ENCODE measurements at regions of chr17 and their contacts with region 1.

Region 1: GRCh38 chr17:59440784-59441441 is 109.5 kb downstream of the YPEL2 start:
- DNase-seq: peak; percentile 80 to 81
- H3K4me3 ChIP-seq: no peak overlapping the region
- H3K27ac ChIP-seq: peak overlapping the region in 1 of 2 donors; percentile 35
- H3K4me1 ChIP-seq: no peaks in the 10 kb centered on the region
- H3K27me3 ChIP-seq: no peaks in the 10 kb centered on the region
- CTCF ChIP-seq: peak; percentile 81 to 88 (median 86)
- POLR2A ChIP-seq: no peak

Region 2: GRCh38 chr17:59329638-59330313 is 111.1 kb before region 1 on chr17:
- intact Hi-C with region 1: loop called (anchors 5 kb)
- DNase-seq: peak in 1 of 2 donors; percentile 24
- H3K4me3 ChIP-seq: peak overlapping the region in 1 of 3 donors; percentile 96
- H3K27ac ChIP-seq: peak overlapping the region; percentile 94 to 97
- H3K4me1 ChIP-seq: peaks cover 0 to 21% of the 10 kb centered on the region in 2 donors
- H3K27me3 ChIP-seq: no peaks in the 10 kb centered on the region
- CTCF ChIP-seq: peak; percentile 34 to 75 (median 65)
- POLR2A ChIP-seq: no peak